ENCODE measurements at regions of chr1 and their contacts with region 1.

Region 1: DNA sequence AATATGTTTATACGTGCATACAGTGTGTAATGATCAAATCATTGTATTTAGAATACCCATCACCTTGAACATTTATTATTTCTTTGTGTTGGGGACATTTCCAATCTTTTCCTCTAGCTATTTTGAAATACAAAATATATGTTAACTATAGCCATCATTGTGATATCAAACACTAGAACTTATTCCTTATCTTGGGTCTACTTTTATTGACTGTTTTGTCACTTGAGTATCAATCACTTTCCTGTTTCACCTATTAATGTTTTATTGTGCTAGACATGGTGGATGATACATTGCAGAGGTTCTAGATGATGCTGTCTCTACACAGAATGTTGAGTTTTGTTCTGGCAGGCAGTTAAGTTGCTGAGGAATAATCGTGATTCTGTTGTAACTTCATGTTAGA is 45.9 kb downstream of the STXBP3 start:
- DNase-seq: no peak
- ATAC-seq: no peak
- H3K4me3 ChIP-seq: no peak overlapping the region
- H3K4me3 Mint-ChIP-seq: no peak overlapping the region
- H3K27ac ChIP-seq: no peak overlapping the region
- H3K27ac Mint-ChIP-seq: no peak overlapping the region
- H3K4me1 ChIP-seq: no peaks in the 10 kb centered on the region
- H3K4me1 Mint-ChIP-seq: no peaks in the 10 kb centered on the region
- H3K27me3 ChIP-seq: no peaks in the 10 kb centered on the region
- H3K27me3 Mint-ChIP-seq: no peaks in the 10 kb centered on the region

Region 2: GRCh38 chr1:108551137-108551862 is 241.1 kb before region 1 on chr1:
- CTCF ChIA-PET with region 1: no interaction called
- POLR2A ChIA-PET with region 1: no interaction called
- DNase-seq: no peak
- ATAC-seq: no peak
- H3K4me3 ChIP-seq: no peak overlapping the region
- H3K4me3 Mint-ChIP-seq: no peak overlapping the region
- H3K27ac ChIP-seq: no peak overlapping the region
- H3K27ac Mint-ChIP-seq: no peak overlapping the region
- H3K4me1 ChIP-seq: no peaks in the 10 kb centered on the region
- H3K4me1 Mint-ChIP-seq: no peaks in the 10 kb centered on the region
- H3K27me3 ChIP-seq: no peaks in the 10 kb centered on the region
- H3K27me3 Mint-ChIP-seq: no peaks in the 10 kb centered on the region

Region 3: DNA sequence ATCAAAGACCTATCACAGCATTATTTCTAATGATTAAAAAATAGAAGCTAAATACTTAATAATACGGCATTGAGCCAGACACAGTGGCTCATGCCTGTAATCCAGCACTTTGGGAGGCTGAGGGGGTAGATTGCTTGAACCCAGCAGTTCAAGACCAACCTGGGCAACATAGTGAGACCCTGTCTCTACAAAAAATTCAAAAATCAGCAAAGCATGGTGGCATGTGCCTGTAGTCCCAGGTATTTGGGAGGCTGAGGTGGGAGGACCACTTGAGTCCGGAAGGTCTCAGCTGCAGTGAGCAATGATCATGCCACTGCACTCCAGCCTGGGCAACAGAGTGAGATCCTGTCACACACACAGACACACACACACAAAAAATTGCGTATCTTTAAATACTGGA is 272.7 kb after region 1 on chr1:
- CTCF ChIA-PET with region 1: no interaction called
- POLR2A ChIA-PET with region 1: interaction called in 1 of 2 experiments, 12 read pairs
- DNase-seq: no peak
- ATAC-seq: no peak
- H3K4me3 ChIP-seq: no peak overlapping the region
- H3K4me3 Mint-ChIP-seq: no peak overlapping the region
- H3K27ac ChIP-seq: no peak overlapping the region
- H3K27ac Mint-ChIP-seq: no peak overlapping the region
- H3K4me1 ChIP-seq: no peaks in the 10 kb centered on the region
- H3K4me1 Mint-ChIP-seq: peaks cover 0 to 2% (median 0%) of the 10 kb centered on the region in 3 donors
- H3K27me3 ChIP-seq: no peaks in the 10 kb centered on the region
- H3K27me3 Mint-ChIP-seq: no peaks in the 10 kb centered on the region

Measured in T-cell (primary cell).